Colonic mucosa (tissue), 4 donors: ENCODE measurements at regions of chr16 and their contacts with region 1.

Region 1: GRCh38 chr16:66894948-66895688 is 14.8 kb downstream of the PDP2 start:
- DNase-seq: peak; percentile 86
- H3K4me3 ChIP-seq: no peak overlapping the region
- H3K27ac ChIP-seq: no peak overlapping the region
- H3K4me1 ChIP-seq: peaks cover 19% of the 10 kb centered on the region
- H3K27me3 ChIP-seq: no peaks in the 10 kb centered on the region
- CTCF ChIP-seq: peak; percentile 68

Region 2: GRCh38 chr16:66934153-66934838 is 39.2 kb after region 1 on chr16 and contains the start of gene CIAO2B:
- intact Hi-C with region 1: loop called (anchors 5 kb)
- DNase-seq: peak; percentile 92
- H3K4me3 ChIP-seq: peak within 1 kb of the TSS; percentile 94
- H3K27ac ChIP-seq: peak within 1 kb of the TSS; percentile 86
- H3K4me1 ChIP-seq: peaks cover 20% of the 10 kb centered on the region
- H3K27me3 ChIP-seq: no peaks in the 10 kb centered on the region
- CTCF ChIP-seq: no peak
- total RNA-seq, gene CIAO2B: 105 to 146 TPM